ENCODE measurements at regions of chr2 and their contacts with region 1.

Region 1: GRCh38 chr2:202375609-202376408 is at the start of gene BMPR2:
- DNase-seq: peak; percentile 91
- ATAC-seq: peak; percentile 78
- H3K4me3 ChIP-seq: peak within 1 kb of the TSS; percentile 72 to 96 (median 91)
- H3K4me3 Mint-ChIP-seq: peak within 1 kb of the TSS; percentile 98
- H3K27ac ChIP-seq: peak within 1 kb of the TSS; percentile 58 to 67
- H3K27ac Mint-ChIP-seq: peak within 1 kb of the TSS; percentile 93
- H3K4me1 ChIP-seq: peaks cover 13 to 24% of the 10 kb centered on the region in 2 donors
- H3K4me1 Mint-ChIP-seq: peaks cover 26% of the 10 kb centered on the region
- H3K27me3 ChIP-seq: no peaks in the 10 kb centered on the region
- H3K27me3 Mint-ChIP-seq: no peaks in the 10 kb centered on the region
- CTCF ChIP-seq: no peak
- total RNA-seq, gene BMPR2: 24.6 and 27.2 TPM in 2 replicates

Region 2: DNA sequence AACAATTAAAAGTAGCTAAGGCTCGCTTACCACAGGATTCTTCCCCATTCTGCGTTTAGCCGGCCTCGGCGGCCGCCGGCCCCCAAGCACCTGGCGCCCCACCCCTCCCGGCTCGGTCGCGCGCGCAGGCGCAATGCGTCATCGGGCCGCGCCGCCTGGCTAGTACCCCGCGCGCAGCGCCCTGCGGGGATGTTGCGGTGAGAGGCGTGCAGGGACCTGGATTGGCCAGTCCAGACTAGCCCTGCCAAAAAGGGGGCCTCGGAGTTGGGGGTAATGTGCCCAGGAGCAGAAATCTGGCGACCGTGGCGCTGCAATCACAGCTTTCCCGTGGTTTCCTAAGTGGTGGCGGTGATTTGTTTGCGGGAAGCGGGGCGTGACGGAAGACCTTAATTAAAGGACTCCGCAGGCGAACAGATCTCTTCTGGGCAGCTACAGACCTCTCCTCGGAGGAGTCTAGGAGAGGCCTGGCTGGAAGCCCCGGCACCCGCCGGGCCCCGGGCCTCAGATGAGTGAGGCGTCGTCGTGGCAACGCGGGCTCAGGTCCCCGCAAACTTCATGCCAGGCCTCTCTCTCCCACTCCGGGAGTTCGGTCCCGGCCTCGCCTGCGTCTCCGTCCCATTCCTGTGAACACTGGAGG is 733.1 kb before region 1 on chr2:
- CTCF ChIA-PET with region 1: no interaction called
- POLR2A ChIA-PET with region 1: no interaction called
- intact Hi-C with region 1: loop called (anchors 5 kb)
- DNase-seq: peak; percentile 92
- ATAC-seq: peak; percentile 86
- H3K4me3 ChIP-seq: peak overlapping the region; percentile 73 to 100 (median 95)
- H3K4me3 Mint-ChIP-seq: peak overlapping the region; percentile 96
- H3K27ac ChIP-seq: peak overlapping the region; percentile 89 to 93
- H3K27ac Mint-ChIP-seq: peak overlapping the region; percentile 97
- H3K4me1 ChIP-seq: peaks cover 10 to 14% of the 10 kb centered on the region in 2 donors
- H3K4me1 Mint-ChIP-seq: peaks cover 12% of the 10 kb centered on the region
- H3K27me3 ChIP-seq: peaks cover 0 to 2% (median 0%) of the 10 kb centered on the region in 4 experiments
- H3K27me3 Mint-ChIP-seq: peaks cover 7% of the 10 kb centered on the region
- CTCF ChIP-seq: no peak

Region 3: GRCh38 chr2:202238234-202239197 is 137.3 kb before region 1 on chr2 and contains the start of gene SUMO1:
- CTCF ChIA-PET with region 1: no interaction called
- POLR2A ChIA-PET with region 1: no interaction called
- intact Hi-C with region 1: loop called (anchors 10 kb)
- DNase-seq: peak; percentile 92
- ATAC-seq: peak; percentile 95
- H3K4me3 ChIP-seq: peak within 1 kb of the TSS; percentile 75 to 88 (median 83)
- H3K4me3 Mint-ChIP-seq: peak within 1 kb of the TSS; percentile 96
- H3K27ac ChIP-seq: peak within 1 kb of the TSS; percentile 78 to 89
- H3K27ac Mint-ChIP-seq: peak within 1 kb of the TSS; percentile 91
- H3K4me1 ChIP-seq: peaks cover 12 to 21% of the 10 kb centered on the region in 2 donors
- H3K4me1 Mint-ChIP-seq: peaks cover 32% of the 10 kb centered on the region
- H3K27me3 ChIP-seq: peaks cover 0 to 1% (median 0%) of the 10 kb centered on the region in 4 experiments
- H3K27me3 Mint-ChIP-seq: no peaks in the 10 kb centered on the region
- CTCF ChIP-seq: no peak
- total RNA-seq, gene SUMO1: 49.1 and 60.0 TPM in 2 replicates

Region 4: DNA sequence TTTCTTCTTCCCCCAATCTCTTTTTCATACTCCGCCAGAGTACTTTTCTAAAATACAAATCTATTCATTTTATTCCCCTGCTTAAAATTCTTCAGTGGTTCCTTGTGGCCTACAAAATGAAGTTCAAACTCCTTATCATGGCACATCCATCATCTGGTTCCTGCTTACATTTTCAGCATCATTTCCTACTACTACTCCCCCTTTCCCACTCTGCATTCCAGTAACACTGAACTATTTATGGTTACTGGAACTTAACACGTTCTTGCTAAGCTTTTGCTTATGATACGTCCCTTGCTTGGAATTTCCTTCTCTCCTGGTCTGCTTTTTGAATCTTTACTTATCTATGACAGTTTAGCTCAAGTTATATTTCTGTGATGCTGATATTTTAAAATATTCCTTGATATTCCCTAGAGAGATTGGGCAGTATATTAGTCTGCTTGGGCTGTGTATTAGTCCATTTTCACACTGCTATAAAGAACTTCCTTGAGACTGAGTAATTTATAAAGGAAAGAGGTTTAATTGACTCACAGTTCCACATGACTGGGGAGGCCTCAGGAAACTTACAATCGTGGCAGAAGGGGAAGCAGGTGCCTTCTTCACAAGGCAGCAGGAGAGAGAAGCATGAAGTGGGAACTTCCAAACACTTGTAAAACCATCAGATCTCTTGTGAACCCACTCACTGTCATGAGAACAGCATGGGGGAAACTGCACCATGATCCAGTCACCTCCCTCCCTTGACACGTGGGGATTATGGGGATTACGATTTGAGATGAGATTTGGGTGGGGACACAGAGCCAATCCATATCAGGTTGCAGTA is 53.6 kb after region 1 on chr2:
- CTCF ChIA-PET with region 1: no interaction called
- POLR2A ChIA-PET with region 1: no interaction called
- intact Hi-C with region 1: no loop called
- DNase-seq: no peak
- ATAC-seq: no peak
- H3K4me3 ChIP-seq: no peak overlapping the region
- H3K4me3 Mint-ChIP-seq: no peak overlapping the region
- H3K27ac ChIP-seq: no peak overlapping the region
- H3K27ac Mint-ChIP-seq: no peak overlapping the region
- H3K4me1 ChIP-seq: peaks cover 3 to 4% of the 10 kb centered on the region in 2 donors
- H3K4me1 Mint-ChIP-seq: peaks cover 13% of the 10 kb centered on the region
- H3K27me3 ChIP-seq: peaks cover 0 to 7% (median 5%) of the 10 kb centered on the region in 4 experiments
- H3K27me3 Mint-ChIP-seq: peaks cover 12% of the 10 kb centered on the region
- CTCF ChIP-seq: no peak

Region 5: GRCh38 chr2:202911512-202912341 is 535.9 kb after region 1 on chr2 and contains the starts of genes CARF and WDR12:
- CTCF ChIA-PET with region 1: no interaction called
- POLR2A ChIA-PET with region 1: no interaction called
- intact Hi-C with region 1: loop called (anchors 1 kb)
- DNase-seq: peak; percentile 96
- ATAC-seq: peak; percentile 81
- H3K4me3 ChIP-seq: peak within 1 kb of the TSS; percentile 52 to 100 (median 97)
- H3K4me3 Mint-ChIP-seq: peak within 1 kb of the TSS; percentile 99
- H3K27ac ChIP-seq: peak within 1 kb of the TSS; percentile 67 to 83
- H3K27ac Mint-ChIP-seq: peak within 1 kb of the TSS; percentile 99
- H3K4me1 ChIP-seq: peaks cover 5 to 11% of the 10 kb centered on the region in 2 donors
- H3K4me1 Mint-ChIP-seq: peaks cover 24% of the 10 kb centered on the region
- H3K27me3 ChIP-seq: no peaks in the 10 kb centered on the region
- H3K27me3 Mint-ChIP-seq: no peaks in the 10 kb centered on the region
- CTCF ChIP-seq: no peak
- total RNA-seq, gene CARF: 27.5 and 28.4 TPM in 2 replicates
- total RNA-seq, gene WDR12: 17.4 and 20.8 TPM in 2 replicates

Region 6: GRCh38 chr2:203238704-203239526 is 863.1 kb after region 1 on chr2 and contains the start of gene CYP20A1:
- CTCF ChIA-PET with region 1: no interaction called
- POLR2A ChIA-PET with region 1: no interaction called
- intact Hi-C with region 1: loop called (anchors 1 kb)
- DNase-seq: peak; percentile 98
- ATAC-seq: peak; percentile 86
- H3K4me3 ChIP-seq: peak within 1 kb of the TSS; percentile 63 to 98 (median 95)
- H3K4me3 Mint-ChIP-seq: peak within 1 kb of the TSS; percentile 96
- H3K27ac ChIP-seq: peak within 1 kb of the TSS; percentile 88 to 94
- H3K27ac Mint-ChIP-seq: peak within 1 kb of the TSS; percentile 98
- H3K4me1 ChIP-seq: peaks cover 17 to 19% of the 10 kb centered on the region in 2 donors
- H3K4me1 Mint-ChIP-seq: peaks cover 31% of the 10 kb centered on the region
- H3K27me3 ChIP-seq: no peaks in the 10 kb centered on the region
- H3K27me3 Mint-ChIP-seq: no peaks in the 10 kb centered on the region
- CTCF ChIP-seq: no peak
- total RNA-seq, gene CYP20A1: 38.5 and 40.8 TPM in 2 replicates